Activated naive CD4-positive, alpha-beta T cell treated with anti-CD3 and anti-CD28 coated beads for 36 hours (primary cell): ENCODE measurements at regions of chrX and their contacts with region 1.

Region 1: DNA sequence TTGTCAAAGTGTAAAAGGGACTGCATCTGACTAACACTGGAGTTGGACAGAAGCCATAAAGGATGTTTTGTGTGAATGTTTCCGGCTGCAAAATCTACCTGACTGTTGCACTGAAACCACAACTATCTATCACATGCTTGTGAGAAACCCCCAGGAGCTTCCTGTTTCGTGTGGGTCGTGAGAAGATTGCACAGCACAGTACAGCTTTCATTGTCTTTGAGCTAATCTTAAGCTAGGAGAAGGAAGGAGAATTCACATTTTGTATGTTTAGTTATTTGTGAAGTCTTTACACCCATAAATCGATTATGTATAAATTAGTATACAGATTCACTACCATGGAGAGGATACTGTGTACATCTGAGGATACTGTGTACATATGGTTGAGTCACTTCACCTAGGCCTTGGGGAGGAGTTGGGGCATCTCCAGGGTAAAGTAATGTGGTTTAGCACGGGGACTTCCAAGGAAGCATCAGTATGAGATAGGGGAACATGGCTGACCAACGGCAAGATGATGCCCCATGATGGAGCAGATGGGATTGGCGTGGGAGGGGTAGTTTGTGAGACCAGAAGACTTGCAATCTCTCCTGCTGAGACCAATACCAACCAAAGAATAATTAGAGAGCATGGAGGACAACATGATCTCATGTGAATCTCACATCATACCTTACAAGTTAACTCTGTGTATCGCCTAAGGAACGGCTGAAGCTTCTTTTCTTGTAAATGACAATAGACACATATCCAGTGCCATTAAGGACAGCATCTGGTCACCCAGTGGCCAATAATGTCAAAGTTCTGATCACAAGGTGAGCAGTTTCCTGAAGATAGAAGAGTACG is 43.1 kb upstream of the FAM9C start:
- DNase-seq: peak; percentile 74
- H3K4me3 Mint-ChIP-seq: peak overlapping the region; percentile 79
- H3K27ac Mint-ChIP-seq: peak overlapping the region; percentile 97
- H3K4me1 Mint-ChIP-seq: peaks cover 87% of the 10 kb centered on the region
- H3K27me3 Mint-ChIP-seq: no peaks in the 10 kb centered on the region

Region 2: GRCh38 chrX:12463052-12463451 is 624.5 kb before region 1 on chrX:
- CTCF ChIA-PET with region 1: no interaction called
- intact Hi-C with region 1: no loop called
- DNase-seq: no peak
- H3K4me3 Mint-ChIP-seq: no peak overlapping the region
- H3K27ac Mint-ChIP-seq: no peak overlapping the region
- H3K4me1 Mint-ChIP-seq: no peaks in the 10 kb centered on the region
- H3K27me3 Mint-ChIP-seq: no peaks in the 10 kb centered on the region

Region 3: GRCh38 chrX:12791257-12792228 is 296.0 kb before region 1 on chrX and contains the start of gene PRPS2:
- CTCF ChIA-PET with region 1: no interaction called
- intact Hi-C with region 1: loop called (anchors 10 kb)
- DNase-seq: peak; percentile 80
- H3K4me3 Mint-ChIP-seq: peak within 1 kb of the TSS; percentile 82
- H3K27ac Mint-ChIP-seq: peak within 1 kb of the TSS; percentile 90
- H3K4me1 Mint-ChIP-seq: peaks cover 35% of the 10 kb centered on the region
- H3K27me3 Mint-ChIP-seq: no peaks in the 10 kb centered on the region
- total RNA-seq, gene PRPS2: 171 to 180 TPM

Region 4: DNA sequence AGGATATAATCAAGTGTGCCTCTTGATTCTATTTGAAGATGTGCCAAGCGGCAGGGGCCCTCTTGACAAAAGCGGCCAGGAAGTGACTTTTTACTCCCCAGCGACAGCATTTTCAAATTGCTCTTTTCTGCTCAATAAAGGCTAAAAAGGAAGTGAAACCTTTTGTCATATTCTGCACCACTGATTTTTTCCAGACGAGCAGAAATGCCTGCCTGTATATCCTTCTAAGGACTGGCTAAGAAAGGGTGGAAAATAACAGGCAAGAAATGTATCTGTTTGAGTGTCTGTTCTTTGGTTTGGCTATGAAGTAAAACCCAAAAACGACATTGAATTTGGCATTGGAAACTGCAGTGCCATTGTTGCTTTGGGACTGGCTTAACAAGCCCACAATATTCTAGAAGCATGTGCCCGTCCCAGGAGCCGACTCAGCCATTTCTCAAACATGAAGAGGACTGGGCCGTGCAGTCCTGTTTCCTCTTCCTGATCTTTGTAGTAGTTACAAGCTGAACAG is 87.2 kb before region 1 on chrX:
- CTCF ChIA-PET with region 1: interaction called, 26 read pairs
- intact Hi-C with region 1: loop called (anchors 1 kb)
- DNase-seq: peak; percentile 69
- H3K4me3 Mint-ChIP-seq: peak overlapping the region; percentile 65
- H3K27ac Mint-ChIP-seq: peak overlapping the region; percentile 92
- H3K4me1 Mint-ChIP-seq: peaks cover 67% of the 10 kb centered on the region
- H3K27me3 Mint-ChIP-seq: no peaks in the 10 kb centered on the region

Region 5: DNA sequence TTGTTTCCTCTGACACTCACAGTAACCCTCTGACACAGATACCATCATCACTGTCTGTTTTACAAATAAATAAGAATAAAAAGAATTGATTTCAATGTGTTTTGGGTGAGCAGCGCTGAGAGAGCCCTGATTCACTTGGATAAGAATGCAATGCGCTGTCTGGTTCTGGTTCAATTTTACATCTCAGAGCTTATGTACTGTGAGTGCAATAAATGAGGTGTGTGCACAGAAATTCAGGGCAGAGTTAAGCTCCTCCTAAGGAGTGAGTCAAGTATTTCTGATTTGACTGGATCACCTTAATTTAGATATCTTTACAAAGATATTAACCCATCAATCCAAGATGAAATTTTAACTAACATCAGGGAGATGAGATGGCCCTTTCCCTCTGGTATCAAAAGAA is 54.3 kb before region 1 on chrX:
- CTCF ChIA-PET with region 1: no interaction called
- intact Hi-C with region 1: no loop called
- DNase-seq: no peak
- H3K4me3 Mint-ChIP-seq: no peak overlapping the region
- H3K27ac Mint-ChIP-seq: no peak overlapping the region
- H3K4me1 Mint-ChIP-seq: peaks cover 48% of the 10 kb centered on the region
- H3K27me3 Mint-ChIP-seq: no peaks in the 10 kb centered on the region

Region 6: DNA sequence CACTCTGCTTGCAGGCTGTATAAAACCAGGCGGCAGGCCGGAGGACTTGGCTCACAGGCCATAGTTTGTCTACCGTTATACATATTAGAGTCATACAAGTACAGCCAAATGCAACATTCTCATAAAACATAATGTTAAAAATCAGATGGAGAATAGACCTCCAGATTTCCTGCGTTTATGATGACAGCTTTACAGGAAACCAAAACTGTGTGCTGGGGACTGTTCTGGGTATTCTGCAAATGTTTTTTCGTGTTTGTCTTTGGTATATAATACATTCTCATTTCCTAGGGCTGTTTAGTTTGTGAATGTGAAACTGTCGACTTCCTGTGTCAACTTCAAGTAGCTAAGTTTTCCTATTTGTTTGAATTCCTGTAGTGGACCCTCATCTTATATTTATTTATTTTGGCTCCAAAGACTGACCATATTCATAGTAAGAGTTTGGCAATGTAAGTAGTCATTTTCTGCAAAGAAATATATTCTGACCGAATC is 36.4 kb after region 1 on chrX:
- CTCF ChIA-PET with region 1: no interaction called
- intact Hi-C with region 1: loop called (anchors 2 kb)
- DNase-seq: peak; percentile 6
- H3K4me3 Mint-ChIP-seq: peak overlapping the region; percentile 39
- H3K27ac Mint-ChIP-seq: peak overlapping the region; percentile 70
- H3K4me1 Mint-ChIP-seq: peaks cover 49% of the 10 kb centered on the region
- H3K27me3 Mint-ChIP-seq: no peaks in the 10 kb centered on the region

Region 7: DNA sequence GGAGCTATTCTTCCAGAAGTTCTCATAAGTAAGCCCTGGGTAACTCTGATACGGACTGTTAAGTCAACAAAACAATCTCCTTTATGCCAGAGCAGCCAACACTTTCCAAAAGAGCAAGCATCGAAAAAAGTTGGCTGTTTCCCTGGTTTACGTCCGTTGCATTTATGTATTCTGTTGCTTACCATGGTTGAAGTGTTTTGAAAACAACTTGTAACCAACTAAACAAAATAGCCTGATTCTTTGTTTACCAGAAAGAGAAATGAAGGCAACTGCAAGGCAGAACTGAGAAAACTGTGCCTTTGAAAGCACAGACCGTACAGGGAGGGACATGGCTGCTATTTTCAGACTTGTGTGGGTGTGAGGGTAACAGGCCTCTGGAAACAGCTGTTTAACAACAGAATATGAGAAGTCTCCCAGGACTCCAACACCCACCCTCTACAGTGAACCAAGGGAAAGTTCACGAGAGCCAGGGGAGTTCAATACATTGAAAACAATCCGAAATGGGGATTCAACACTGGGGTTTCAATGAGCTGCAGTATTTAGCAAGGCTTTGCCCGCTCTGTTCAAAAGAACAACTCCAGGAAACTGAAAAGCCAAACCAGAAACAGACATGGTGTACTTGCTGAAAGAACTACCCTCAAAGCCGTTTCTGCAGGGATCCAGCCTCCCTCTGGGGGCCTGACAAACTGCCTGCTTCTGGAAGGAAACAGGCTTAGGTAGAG is 386.1 kb after region 1 on chrX:
- CTCF ChIA-PET with region 1: interaction called, 3 read pairs
- intact Hi-C with region 1: loop called (anchors 5 kb)
- DNase-seq: peak; percentile 8
- H3K4me3 Mint-ChIP-seq: peak overlapping the region; percentile 59
- H3K27ac Mint-ChIP-seq: peak overlapping the region; percentile 84
- H3K4me1 Mint-ChIP-seq: peaks cover 26% of the 10 kb centered on the region
- H3K27me3 Mint-ChIP-seq: no peaks in the 10 kb centered on the region

Region 8: DNA sequence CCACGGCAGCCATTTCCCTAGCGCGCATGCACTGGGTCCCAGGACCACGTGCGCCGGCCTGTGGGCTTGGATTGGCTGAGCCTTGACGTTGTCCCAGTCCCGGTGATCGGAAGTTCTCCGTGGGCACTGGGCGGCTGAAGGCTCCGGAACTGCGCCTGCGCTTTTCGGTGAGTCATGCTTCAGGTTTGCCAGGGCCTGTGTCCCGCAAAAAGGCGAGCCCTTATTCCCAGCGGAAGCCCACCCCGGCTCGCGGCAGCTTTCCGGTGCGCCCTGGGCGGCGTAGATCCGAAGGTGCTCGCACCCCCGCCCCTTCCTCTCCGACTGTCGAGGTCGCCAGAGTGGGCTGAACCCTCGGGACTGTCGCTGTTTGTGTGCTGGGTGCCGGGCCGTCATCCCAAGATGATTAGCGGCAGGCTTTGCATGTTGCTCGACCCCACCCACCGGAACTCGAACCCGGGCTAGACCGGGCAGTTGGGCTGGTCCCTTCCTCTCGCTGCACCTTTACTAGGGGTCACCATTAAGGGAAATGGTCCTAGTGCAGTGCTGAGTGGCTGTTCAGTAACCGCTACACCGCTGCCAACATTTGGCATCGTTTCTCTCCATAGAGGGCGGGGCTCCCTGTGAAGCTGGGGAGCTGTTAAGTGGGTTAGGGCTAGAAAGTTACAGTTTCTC is 565.6 kb after region 1 on chrX and contains the start of gene TCEANC:
- CTCF ChIA-PET with region 1: no interaction called
- intact Hi-C with region 1: loop called (anchors 2 kb)
- DNase-seq: peak; percentile 95
- H3K4me3 Mint-ChIP-seq: peak within 1 kb of the TSS; percentile 88
- H3K27ac Mint-ChIP-seq: peak within 1 kb of the TSS; percentile 93
- H3K4me1 Mint-ChIP-seq: peaks cover 24% of the 10 kb centered on the region
- H3K27me3 Mint-ChIP-seq: no peaks in the 10 kb centered on the region
- total RNA-seq, gene TCEANC: 2.5 to 2.7 TPM